ENCODE measurements at regions of chr5 and their contacts with region 1.

Region 1: DNA sequence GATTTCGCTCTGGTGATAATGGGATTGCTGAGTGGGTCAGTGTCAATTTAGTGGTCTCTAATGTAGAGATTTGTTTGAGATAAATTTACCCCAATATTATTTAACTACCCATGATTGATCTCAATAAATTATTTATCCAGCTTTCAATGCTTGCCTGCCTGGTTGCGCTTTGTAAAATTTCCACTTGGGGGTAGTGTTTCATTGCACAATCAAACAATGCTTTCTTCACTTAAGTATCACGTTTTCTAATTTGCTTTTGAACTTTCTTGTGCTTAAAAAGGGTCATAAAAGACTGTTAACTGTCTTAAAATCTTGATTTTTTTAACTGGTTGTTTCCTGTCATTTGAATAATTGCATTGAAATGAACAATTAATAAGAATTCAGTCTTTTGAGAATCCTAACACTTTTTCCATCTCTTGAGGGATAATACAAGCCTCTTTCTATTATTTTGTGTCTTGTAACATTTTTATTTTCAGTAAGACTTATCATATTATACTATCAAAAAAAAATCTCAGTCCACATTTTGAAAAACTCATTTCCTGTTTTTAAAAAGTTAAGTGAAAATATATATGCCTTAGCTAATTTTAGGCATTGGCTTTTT is 18.7 kb downstream of the HSD17B4 start:
- DNase-seq: peak in 1 of 2 experiments; percentile 52
- H3K4me3 ChIP-seq: no peak overlapping the region
- H3K4me3 Mint-ChIP-seq: no peak overlapping the region
- H3K27ac Mint-ChIP-seq: no peak overlapping the region
- H3K4me1 ChIP-seq: no peaks in the 10 kb centered on the region
- H3K4me1 Mint-ChIP-seq: no peaks in the 10 kb centered on the region
- H3K27me3 ChIP-seq: no peaks in the 10 kb centered on the region
- H3K27me3 Mint-ChIP-seq: no peaks in the 10 kb centered on the region
- CTCF ChIP-seq: peak; percentile 72 to 76

Region 2: GRCh38 chr5:119578937-119579336 is 108.0 kb after region 1 on chr5:
- CTCF ChIA-PET with region 1: no interaction called
- POLR2A ChIA-PET with region 1: no interaction called
- intact Hi-C with region 1: loop called (anchors 5 kb)
- DNase-seq: peak; percentile 55 to 68
- H3K4me3 ChIP-seq: no peak overlapping the region
- H3K4me3 Mint-ChIP-seq: no peak overlapping the region
- H3K27ac Mint-ChIP-seq: no peak overlapping the region
- H3K4me1 ChIP-seq: no peaks in the 10 kb centered on the region
- H3K4me1 Mint-ChIP-seq: peaks cover 21% of the 10 kb centered on the region
- H3K27me3 ChIP-seq: no peaks in the 10 kb centered on the region; the same call in 1 of the 2 replicates
- H3K27me3 Mint-ChIP-seq: no peaks in the 10 kb centered on the region
- CTCF ChIP-seq: peak; percentile 18 to 41

Region 3: GRCh38 chr5:119743927-119744326 is 273.0 kb after region 1 on chr5:
- CTCF ChIA-PET with region 1: interaction called, 3 read pairs
- POLR2A ChIA-PET with region 1: no interaction called
- intact Hi-C with region 1: loop called (anchors 1 kb)
- DNase-seq: peak in 1 of 2 experiments; percentile 66
- H3K4me3 ChIP-seq: no peak overlapping the region
- H3K4me3 Mint-ChIP-seq: no peak overlapping the region
- H3K27ac Mint-ChIP-seq: no peak overlapping the region
- H3K4me1 ChIP-seq: no peaks in the 10 kb centered on the region
- H3K4me1 Mint-ChIP-seq: no peaks in the 10 kb centered on the region
- H3K27me3 ChIP-seq: no peaks in the 10 kb centered on the region
- H3K27me3 Mint-ChIP-seq: peaks cover 3% of the 10 kb centered on the region
- CTCF ChIP-seq: peak; percentile 61 to 65

Region 4: GRCh38 chr5:120457839-120458507 is 987.0 kb after region 1 on chr5:
- CTCF ChIA-PET with region 1: no interaction called
- POLR2A ChIA-PET with region 1: no interaction called
- intact Hi-C with region 1: loop called (anchors 1 kb)
- DNase-seq: peak; percentile 69 to 70
- H3K4me3 ChIP-seq: peak overlapping the region; percentile 11
- H3K4me3 Mint-ChIP-seq: peak overlapping the region; percentile 68
- H3K27ac Mint-ChIP-seq: no peak overlapping the region
- H3K4me1 ChIP-seq: no peaks in the 10 kb centered on the region
- H3K4me1 Mint-ChIP-seq: peaks cover 5% of the 10 kb centered on the region
- H3K27me3 ChIP-seq: no peaks in the 10 kb centered on the region
- H3K27me3 Mint-ChIP-seq: peaks cover 6% of the 10 kb centered on the region
- CTCF ChIP-seq: peak; percentile 70 to 78

Measured in Caco-2 (cell line).